Posterior cingulate gyrus (tissue), 11 donors: ENCODE measurements at regions of chr6 and their contacts with region 1.

Region 1: DNA sequence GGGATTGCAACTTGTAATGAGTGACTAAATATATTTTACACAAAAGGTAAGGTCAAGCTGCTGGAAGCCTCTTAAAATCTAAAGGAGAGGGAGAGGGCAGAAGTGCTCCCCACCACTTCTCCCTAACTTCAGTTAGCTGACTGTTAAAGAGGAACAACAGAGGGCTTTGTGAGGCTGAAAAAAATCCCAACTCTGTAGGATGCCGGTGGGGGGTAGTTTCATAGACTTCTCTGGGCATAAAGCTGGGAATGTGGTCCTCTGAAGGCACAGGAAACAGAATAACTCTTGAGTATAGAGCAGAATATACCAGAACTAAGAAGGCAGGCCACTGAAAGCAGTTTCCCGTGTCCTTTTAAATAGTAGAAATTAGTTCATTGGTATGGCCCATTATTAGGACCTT is 71.6 kb downstream of the KIF6 start:
- DNase-seq: peak in 1 of 10 donors; percentile 55

Region 2: DNA sequence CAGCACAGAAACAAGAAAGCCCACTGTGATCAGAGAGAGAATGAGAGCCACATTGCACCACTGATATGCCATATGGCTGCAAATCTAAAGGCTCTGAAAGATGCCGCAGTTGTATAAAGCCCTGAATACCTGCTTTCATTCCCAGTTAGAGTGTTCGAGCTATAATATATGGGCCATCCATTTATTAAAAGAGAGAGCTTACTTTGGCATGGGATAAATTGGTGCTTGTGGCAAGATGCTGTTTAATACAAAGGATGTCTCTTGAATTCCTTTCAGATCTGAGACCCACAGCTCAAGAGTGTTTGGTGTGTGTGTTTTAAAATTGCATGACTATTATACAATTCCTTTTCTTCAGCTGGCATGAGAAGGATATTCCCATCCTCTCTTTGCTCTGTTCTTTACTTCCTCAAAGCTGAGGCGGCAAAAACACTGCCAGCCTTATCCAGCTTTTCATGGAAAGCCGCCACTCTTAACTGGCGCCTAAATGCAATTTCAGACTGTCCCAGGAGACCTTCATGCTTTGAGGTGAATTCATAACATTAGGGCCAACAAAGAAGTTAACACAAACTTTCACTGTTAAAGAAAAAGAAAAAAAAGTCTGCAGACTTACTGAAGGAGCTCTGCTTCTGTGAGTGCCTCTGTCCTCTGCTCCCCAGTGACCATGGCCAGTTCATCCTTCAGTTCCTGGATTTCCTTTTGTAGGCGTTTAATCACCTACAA is 76.0 kb before region 1 on chr6:
- intact Hi-C with region 1: no loop called
- DNase-seq: no peak

Region 3: DNA sequence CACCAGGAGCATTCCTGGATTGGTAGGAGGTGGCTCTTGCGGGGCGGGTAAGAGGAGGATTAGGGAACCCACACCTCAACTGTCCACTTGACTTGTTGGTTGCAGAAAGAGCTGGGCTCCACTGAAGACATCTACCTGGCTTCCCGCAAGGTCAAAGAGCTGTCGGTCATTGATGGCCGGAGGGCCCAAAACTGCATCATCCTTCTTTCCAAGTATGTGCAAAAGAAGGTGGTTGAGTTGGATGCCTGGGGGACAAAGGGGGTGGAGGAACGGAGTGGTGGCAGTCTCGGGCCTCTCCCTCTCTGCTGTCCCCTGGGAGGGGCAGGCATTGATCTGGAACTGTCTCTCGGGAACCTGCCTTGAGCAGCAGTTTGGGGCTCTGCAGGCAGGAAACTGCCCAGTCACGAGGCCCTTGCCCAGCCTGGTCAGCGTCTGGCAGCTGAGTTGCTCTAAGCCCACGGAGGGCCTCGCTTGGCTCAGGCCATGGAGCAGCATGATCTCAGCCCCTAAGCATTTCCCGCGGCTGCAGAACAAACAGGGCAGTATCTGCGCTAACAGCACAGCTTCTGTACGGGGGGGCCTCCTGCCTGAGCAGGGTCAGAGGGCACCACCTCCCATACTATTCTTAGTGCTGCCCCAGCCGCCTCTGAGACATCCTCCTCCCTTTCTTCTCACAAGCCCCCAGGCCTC is 233.9 kb after region 1 on chr6:
- intact Hi-C with region 1: loop called (anchors 10 kb)
- DNase-seq: peak; percentile 66 to 96 (median 76)